IMR-90 (cell line): ENCODE measurements at regions of chr3 and their contacts with region 1.

Region 1: DNA sequence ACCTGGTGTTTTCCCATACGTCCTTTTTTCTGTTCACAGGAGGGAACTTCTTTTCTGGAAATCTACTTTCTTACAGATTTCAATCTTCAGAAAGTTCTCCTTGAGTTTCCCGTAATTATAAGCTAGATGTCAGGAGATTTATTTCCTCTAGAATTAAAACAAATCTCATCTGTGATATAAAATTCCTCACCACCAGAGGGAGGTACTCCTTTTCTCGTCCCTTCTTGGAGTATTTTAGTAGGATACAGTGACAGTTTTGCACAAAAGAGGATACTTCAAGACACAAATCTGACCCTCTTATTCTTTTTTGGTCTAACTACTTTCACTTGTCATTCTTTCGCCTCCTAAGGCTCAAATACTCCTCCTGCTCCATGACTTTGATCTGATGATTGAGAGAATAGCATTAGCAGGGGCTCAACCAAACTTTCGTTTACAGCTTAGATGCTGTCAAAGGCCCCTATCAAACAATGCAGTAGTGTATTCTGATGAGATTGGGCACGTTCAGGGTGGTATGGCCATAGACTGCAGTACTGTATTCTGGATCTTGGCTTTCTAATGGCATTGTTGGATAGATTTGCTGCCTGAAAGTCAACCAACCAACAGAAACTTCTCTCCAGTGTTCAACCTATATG is 38.0 kb downstream of the TMEM41A start:
- DNase-seq: peak; percentile 34
- ATAC-seq: no peak
- H3K4me3 ChIP-seq: no peak overlapping the region
- H3K27ac ChIP-seq: no peak overlapping the region
- H3K4me1 ChIP-seq: no peaks in the 10 kb centered on the region
- H3K27me3 ChIP-seq: no peaks in the 10 kb centered on the region
- CTCF ChIP-seq: peak; percentile 45
- POLR2A ChIP-seq: no peak
- RAD21 ChIP-seq: peak; percentile 35

Region 2: DNA sequence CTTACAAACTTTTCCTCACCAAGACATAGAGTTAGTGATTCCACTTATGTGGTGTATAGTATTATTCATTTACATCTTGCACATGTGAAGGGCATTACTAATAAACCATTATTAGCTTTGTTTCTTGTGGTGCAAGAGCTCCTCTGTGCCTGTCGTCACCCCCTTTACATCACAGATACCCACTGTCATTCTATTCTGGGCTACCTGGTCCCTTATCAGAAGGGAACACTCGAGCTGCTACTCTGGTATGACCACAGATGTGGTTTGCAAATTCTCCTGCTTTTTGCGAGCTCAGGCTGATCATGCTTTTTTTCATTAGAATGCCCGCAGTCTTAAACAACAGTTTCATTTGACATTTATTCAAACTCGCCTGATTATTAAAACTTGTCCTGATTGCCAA is 111.3 kb after region 1 on chr3:
- CTCF ChIA-PET with region 1: interaction called, 10 read pairs
- POLR2A ChIA-PET with region 1: no interaction called
- dilution Hi-C with region 1: no loop called
- in situ Hi-C with region 1: no loop called
- intact Hi-C with region 1: no loop called
- DNase-seq: no peak
- ATAC-seq: no peak
- H3K4me3 ChIP-seq: no peak overlapping the region
- H3K27ac ChIP-seq: no peak overlapping the region
- H3K4me1 ChIP-seq: no peaks in the 10 kb centered on the region
- H3K27me3 ChIP-seq: no peaks in the 10 kb centered on the region
- CTCF ChIP-seq: no peak
- POLR2A ChIP-seq: no peak
- RAD21 ChIP-seq: no peak

Region 3: DNA sequence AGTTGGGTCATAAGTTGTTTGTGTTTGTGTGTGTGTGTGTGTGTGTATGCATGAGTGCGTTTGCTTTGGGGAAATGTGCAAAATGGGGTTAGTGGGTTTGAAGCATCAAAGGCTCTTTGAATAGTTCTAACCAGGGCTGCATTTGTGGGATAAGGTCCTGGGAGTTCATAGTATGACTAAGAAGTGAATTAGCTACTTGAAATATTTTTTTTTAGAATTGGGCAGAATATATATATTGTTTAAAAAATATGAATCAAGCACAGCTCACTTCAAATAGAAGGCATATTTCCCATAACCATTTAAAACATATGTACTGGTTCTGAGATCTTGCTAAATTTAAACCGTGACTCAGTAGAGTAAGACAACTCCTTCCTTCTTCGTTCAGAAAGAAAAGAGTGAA is 320.9 kb after region 1 on chr3:
- CTCF ChIA-PET with region 1: no interaction called
- POLR2A ChIA-PET with region 1: no interaction called
- dilution Hi-C with region 1: no loop called
- in situ Hi-C with region 1: no loop called
- intact Hi-C with region 1: no loop called
- DNase-seq: peak; percentile 90
- ATAC-seq: peak; percentile 84
- H3K4me3 ChIP-seq: no peak overlapping the region
- H3K27ac ChIP-seq: no peak overlapping the region
- H3K4me1 ChIP-seq: peaks cover 21% of the 10 kb centered on the region
- H3K27me3 ChIP-seq: no peaks in the 10 kb centered on the region
- CTCF ChIP-seq: no peak
- POLR2A ChIP-seq: no peak
- RAD21 ChIP-seq: no peak